Activated CD4-positive, alpha-beta T cell treated with anti-CD3 and anti-CD28 coated beads for 36 hours (primary cell): ENCODE measurements at regions of chr1 and their contacts with region 1.

Region 1: DNA sequence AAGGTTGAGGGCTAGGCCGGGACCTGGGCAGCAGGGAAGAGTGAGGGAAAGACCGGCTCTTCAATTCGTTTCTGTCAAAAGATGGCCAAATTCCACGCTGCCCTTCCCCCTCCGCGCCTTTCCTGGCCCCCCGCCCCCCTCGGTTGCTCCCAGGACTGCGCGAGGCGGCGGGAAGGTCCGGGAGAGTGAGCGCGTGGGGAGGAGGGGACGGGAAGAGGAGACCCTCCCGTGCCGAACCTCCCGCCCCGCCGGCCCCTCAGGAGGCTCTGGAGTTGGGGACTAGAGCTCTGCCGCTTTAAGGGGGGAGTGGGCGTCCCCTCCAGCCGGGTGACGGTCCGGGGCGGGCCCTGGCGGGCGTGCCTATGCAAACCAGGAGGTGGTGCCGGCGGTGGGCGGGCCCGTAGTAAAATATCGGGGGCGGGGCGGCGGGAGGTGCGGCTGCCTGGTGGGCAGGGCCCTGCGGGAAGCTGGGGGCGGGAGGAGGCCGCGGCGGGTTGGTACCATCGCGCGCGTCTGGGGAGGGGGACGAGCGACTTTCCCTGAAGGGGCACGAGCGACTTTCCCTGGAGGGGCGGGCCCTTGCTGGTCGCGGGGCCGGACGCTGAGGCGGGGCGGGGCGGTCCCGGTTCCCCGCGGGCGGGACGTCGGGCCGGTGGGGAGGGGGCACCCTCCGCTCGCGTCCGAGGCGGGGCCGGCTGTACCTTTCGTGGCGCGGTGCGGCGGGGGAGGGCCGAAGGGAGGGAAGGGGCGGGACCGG is 58.2 kb downstream of the BCL9 start:
- DNase-seq: peak; percentile 99
- ATAC-seq: peak; percentile 81
- H3K4me3 Mint-ChIP-seq: peak overlapping the region; percentile 89
- H3K27ac Mint-ChIP-seq: peak overlapping the region; percentile 89
- H3K4me1 Mint-ChIP-seq: peaks cover 34% of the 10 kb centered on the region
- H3K27me3 Mint-ChIP-seq: no peaks in the 10 kb centered on the region

Region 2: DNA sequence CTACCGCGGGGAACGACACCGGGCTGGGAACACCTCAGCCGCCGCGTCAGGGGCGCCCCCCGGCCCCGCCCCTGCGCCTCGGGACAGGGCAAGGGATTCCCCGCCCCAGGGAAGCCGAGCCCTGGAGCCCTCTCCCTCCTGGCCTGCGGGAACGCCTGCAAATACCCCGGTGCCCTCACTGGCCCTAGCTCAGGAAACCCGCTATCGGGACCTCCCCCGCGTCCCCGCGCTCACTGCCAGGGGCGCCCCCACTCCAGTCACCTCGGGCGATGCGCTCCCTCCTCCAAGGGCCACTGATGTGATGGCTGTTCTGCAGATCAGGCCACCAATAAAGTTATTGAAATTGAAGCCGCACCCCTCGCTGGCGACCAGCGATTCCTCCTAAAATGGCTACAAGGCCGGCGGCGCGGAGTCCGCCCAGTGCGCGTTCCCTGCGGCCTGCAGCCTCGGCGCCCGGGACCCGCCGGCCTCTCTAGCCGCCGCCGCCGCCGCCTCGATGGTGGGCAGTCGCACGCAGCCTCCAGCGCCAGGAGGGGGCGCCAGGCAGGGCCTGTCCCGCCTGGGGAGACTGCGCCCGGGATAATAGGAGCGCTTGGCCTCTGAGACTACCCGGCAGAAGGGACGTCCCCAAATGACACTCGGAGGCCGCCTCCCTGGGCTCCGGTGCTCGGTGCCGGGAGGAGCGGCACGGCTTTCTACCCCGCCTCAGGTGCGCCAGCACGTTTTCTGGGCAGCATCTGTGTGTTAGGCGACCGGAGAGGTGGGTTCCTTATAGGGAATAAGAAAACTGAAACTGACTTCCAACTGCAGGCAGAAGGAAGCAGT is 427.2 kb before region 1 on chr1 and contains the start of gene PRKAB2:
- CTCF ChIA-PET with region 1: no interaction called
- POLR2A ChIA-PET with region 1: no interaction called
- intact Hi-C with region 1: loop called in 1 of 2 experiments (anchors 5 kb)
- DNase-seq: peak; percentile 94
- ATAC-seq: peak; percentile 92
- H3K4me3 Mint-ChIP-seq: peak within 1 kb of the TSS; percentile 95
- H3K27ac Mint-ChIP-seq: peak within 1 kb of the TSS; percentile 96
- H3K4me1 Mint-ChIP-seq: peaks cover 29% of the 10 kb centered on the region
- H3K27me3 Mint-ChIP-seq: no peaks in the 10 kb centered on the region
- total RNA-seq, gene PRKAB2: 4.8 to 7.0 TPM

Region 3: GRCh38 chr1:147252540-147252939 is 347.0 kb before region 1 on chr1:
- CTCF ChIA-PET with region 1: no interaction called
- POLR2A ChIA-PET with region 1: no interaction called
- intact Hi-C with region 1: no loop called
- DNase-seq: no peak
- ATAC-seq: no peak
- H3K4me3 Mint-ChIP-seq: no peak overlapping the region
- H3K27ac Mint-ChIP-seq: no peak overlapping the region
- H3K4me1 Mint-ChIP-seq: peaks cover 21% of the 10 kb centered on the region
- H3K27me3 Mint-ChIP-seq: no peaks in the 10 kb centered on the region

Region 4: GRCh38 chr1:147545133-147545532 is 54.4 kb before region 1 on chr1:
- CTCF ChIA-PET with region 1: interaction called, 4 read pairs
- POLR2A ChIA-PET with region 1: interaction called, 48 read pairs
- intact Hi-C with region 1: loop called (anchors 1 kb)
- DNase-seq: peak; percentile 95
- ATAC-seq: peak; percentile 77
- H3K4me3 Mint-ChIP-seq: peak overlapping the region; percentile 13
- H3K27ac Mint-ChIP-seq: peak overlapping the region; percentile 68
- H3K4me1 Mint-ChIP-seq: peaks cover 70% of the 10 kb centered on the region
- H3K27me3 Mint-ChIP-seq: no peaks in the 10 kb centered on the region

Region 5: DNA sequence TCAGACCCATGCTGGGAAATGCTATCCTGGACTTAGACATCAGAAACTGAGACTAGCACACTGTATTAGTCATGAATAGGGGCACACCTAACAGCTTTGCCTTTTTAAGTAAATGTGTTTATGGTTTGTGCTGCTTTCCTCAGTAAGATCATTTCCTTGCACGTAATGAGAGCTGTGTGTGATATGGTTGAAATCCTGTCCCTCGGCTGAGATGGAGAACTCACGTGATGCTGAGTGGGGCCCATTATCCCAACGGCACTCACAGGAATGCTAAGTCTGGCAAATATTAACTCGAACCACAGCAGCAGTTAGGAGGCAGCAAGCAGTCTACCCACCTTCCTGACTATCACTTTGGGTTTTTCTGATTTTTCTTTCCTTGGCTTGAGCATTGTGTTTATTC is 20.0 kb before region 1 on chr1:
- CTCF ChIA-PET with region 1: interaction called, 6 read pairs
- POLR2A ChIA-PET with region 1: no interaction called
- intact Hi-C with region 1: loop called (anchors 1 to 2 kb)
- DNase-seq: no peak
- ATAC-seq: peak; percentile 79
- H3K4me3 Mint-ChIP-seq: peak overlapping the region; percentile 30
- H3K27ac Mint-ChIP-seq: peak overlapping the region; percentile 79
- H3K4me1 Mint-ChIP-seq: peaks cover 48% of the 10 kb centered on the region
- H3K27me3 Mint-ChIP-seq: peaks cover 10% of the 10 kb centered on the region

Region 6: DNA sequence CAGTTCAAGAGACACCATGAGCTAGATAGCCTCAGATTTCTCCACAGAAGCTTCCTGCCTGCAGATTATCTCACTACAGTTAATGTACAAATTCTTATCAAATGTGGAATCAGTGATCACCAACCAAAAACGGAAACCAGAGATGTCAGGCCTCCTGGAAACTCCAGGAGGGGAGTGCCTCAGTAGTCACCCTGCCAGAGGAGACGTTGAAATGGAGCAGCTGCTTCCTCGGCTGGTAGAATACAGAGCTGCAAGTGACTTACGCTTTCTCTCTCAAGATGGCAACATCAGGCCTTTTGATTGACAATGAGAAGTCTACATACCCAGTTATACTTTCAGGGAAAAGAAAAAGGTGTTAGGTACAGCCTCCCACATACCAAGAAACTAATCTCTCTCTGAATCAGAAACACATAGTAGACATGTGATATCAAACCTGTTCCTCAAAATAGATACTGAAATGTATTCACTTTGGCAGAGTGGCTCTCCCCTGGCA is 18.6 kb after region 1 on chr1:
- CTCF ChIA-PET with region 1: interaction called, 4 read pairs
- POLR2A ChIA-PET with region 1: no interaction called
- intact Hi-C with region 1: loop called (anchors 2 kb)
- DNase-seq: peak; percentile 69
- ATAC-seq: peak; percentile 98
- H3K4me3 Mint-ChIP-seq: no peak overlapping the region
- H3K27ac Mint-ChIP-seq: peak overlapping the region; percentile 72
- H3K4me1 Mint-ChIP-seq: peaks cover 28% of the 10 kb centered on the region
- H3K27me3 Mint-ChIP-seq: no peaks in the 10 kb centered on the region

Region 7: DNA sequence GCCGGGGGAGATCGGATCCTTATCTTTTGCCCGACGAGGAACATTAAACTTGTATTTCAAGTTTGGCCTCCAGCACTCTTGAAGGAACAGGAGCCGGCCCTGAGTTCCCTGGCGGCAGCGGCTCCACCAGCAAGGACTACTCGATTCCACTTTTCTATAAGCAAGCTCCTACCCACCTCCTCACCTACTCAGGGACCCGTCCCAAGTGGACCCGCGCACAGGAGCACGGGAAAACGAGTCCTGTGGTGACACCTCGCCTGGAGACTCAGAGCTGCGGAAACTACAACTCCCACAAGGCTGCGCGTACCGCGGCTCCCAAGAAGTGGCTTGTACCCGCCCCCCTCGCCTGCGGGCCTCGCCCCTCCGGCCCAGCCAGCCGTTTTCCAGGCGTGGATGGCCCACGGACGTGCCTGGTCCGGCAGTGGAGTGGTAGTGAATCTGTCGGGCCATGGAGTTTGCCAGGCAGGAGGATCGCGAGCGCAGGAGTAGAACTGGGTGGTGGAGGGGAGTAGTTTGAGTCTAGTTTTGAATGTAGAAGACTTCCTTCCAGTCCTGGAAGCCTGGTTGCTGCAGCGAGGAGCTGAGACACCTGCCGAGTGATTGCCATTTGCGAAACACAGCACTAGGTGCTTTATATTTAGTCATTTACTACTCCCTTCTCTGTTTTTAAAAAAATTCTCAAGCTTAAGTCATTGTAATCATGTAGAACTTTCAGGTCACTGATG is 70.9 kb after region 1 on chr1 and contains the start of gene ACP6:
- CTCF ChIA-PET with region 1: no interaction called
- POLR2A ChIA-PET with region 1: no interaction called
- intact Hi-C with region 1: loop called in 1 of 2 experiments (anchors 1 kb)
- DNase-seq: peak; percentile 94
- ATAC-seq: peak; percentile 97
- H3K4me3 Mint-ChIP-seq: peak within 1 kb of the TSS; percentile 86
- H3K27ac Mint-ChIP-seq: peak within 1 kb of the TSS; percentile 88
- H3K4me1 Mint-ChIP-seq: peaks cover 17% of the 10 kb centered on the region
- H3K27me3 Mint-ChIP-seq: peaks cover 6% of the 10 kb centered on the region
- total RNA-seq, gene ACP6: 11.1 to 11.7 TPM